Activated T-helper 1 cell treated with anti-CD3 and anti-CD28 coated beads, Interleukin-12 subunit alpha, Interleukin-12 subunit beta, Interleukin-2, Interleukin-4 antibody, amounts not matched to agents 30 ng/mL and 10 ng/mL and 1 ng/mL, durations not matched to agents 14 hours and 24 hours and 36 hours (primary cell): ENCODE measurements at regions of chr1 and their contacts with region 1.

Region 1: DNA sequence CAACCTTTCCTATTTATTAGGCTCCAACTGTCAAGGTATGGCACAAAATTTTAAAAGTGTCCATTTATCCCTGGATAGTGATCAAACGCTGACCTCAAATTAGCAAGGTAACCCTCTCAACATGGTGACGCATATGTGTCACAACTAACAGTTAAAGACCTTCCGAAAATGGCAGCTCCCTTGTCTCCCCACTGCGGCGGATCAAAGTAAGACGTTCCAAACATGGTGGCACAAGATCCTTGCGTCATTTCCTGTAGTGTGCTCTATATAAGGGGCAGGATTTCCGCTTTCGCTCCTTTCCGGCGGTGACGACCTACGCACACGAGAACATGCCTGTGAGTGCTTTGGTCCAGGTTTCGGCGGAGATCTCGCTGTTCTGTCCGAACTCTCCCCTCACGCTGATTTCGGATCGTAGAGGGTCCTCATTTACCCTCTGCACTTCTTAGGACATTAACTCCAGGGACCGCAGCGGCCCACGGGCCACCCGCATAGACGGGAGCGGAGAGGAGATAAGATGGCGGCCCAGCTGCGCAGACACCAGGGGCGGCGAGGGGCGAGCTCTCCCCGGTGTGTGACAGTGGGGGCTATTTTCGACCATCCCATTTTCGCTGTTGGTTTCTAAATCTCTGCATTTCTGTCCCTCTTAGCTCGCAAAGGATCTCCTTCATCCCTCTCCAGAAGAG is at the start of gene RPS27:
- DNase-seq: peak; percentile 86
- H3K4me3 Mint-ChIP-seq: peak within 1 kb of the TSS; percentile 94
- H3K27ac Mint-ChIP-seq: peak within 1 kb of the TSS; percentile 94
- H3K4me1 Mint-ChIP-seq: peaks cover 51% of the 10 kb centered on the region
- H3K27me3 Mint-ChIP-seq: peaks cover 1% of the 10 kb centered on the region
- total RNA-seq, gene RPS27: 1,226 and 1,349 TPM in 2 replicates

Region 2: DNA sequence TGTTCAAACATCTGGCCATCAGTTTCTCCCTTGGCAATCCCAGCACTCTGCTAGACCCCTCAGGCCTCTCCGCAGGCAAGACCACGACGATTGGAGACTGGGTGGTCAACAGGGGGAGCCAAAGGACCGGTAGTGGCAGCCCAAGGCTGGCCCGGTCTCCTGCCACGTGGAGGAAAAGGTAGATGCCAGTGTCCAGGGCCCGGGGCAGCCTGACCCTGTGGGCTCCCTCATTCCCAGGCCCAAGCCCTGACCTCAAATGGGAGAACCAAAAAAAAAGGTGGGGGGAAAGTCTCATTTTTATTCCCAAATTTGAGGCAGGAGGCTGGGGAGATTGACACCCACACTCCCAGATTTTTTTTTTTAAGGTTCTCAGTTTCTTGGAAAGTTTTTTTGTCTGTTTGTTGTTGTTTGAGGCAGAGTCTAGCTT is 479.6 kb before region 1 on chr1:
- intact Hi-C with region 1: loop called (anchors 1 kb)
- DNase-seq: peak; percentile 65
- H3K4me3 Mint-ChIP-seq: no peak overlapping the region
- H3K27ac Mint-ChIP-seq: peak overlapping the region; percentile 55
- H3K4me1 Mint-ChIP-seq: peaks cover 21% of the 10 kb centered on the region
- H3K27me3 Mint-ChIP-seq: peaks cover 2% of the 10 kb centered on the region

Region 3: GRCh38 chr1:153783233-153784190 is 207.1 kb before region 1 on chr1:
- intact Hi-C with region 1: loop called (anchors 1 kb)
- DNase-seq: peak; percentile 90
- H3K4me3 Mint-ChIP-seq: peak overlapping the region; percentile 88
- H3K27ac Mint-ChIP-seq: peak overlapping the region; percentile 92
- H3K4me1 Mint-ChIP-seq: no peaks in the 10 kb centered on the region
- H3K27me3 Mint-ChIP-seq: peaks cover 16% of the 10 kb centered on the region

Region 4: DNA sequence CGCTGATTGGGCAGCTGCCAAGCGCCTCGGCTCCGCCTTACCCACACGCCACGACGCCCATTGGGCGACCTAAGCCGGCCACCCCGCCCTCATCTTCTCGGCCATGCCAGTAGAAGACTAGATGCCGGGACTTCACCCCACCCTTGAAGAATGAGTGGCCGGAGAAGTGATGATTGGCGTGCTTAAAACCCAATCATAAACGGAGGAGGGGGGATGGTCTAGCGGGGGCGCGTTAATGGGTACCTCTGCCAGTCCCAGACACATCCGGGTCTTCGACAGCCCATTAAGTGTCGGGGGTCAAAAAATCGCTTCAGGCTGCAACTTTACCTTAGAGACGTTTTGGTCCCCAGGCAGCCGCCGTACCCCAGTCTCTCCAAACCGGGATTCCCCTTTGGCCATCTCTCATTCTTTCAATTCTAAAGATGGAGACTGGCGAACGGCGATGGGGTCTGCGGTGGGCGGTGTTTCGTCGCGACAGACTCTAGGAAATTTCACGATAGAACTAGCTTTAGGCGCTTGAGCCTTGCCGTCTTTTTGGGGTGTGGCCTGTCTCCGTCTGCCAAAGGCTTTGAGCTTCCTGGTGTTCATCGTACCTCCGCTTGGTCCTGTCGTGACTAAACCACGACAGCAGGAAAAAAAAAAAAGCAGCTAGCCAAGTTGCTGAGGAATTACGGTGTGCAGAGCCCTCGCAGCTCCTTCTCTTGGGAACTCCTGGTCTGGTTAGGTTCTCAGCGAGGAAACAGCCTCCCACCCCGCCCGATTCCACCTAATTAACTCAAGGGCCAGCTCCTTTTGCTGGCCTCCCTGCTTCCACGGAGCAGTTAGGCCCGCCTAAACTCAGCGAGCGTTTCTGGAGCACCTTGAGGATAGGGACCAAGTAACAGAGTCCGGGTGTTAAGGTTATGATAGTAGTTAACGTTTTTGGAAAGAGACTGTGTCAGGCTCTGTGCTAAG is 67.4 kb before region 1 on chr1 and contains the start of gene GATAD2B:
- intact Hi-C with region 1: loop called (anchors 1 kb)
- DNase-seq: peak; percentile 99
- H3K4me3 Mint-ChIP-seq: peak within 1 kb of the TSS; percentile 97
- H3K27ac Mint-ChIP-seq: peak within 1 kb of the TSS; percentile 92
- H3K4me1 Mint-ChIP-seq: peaks cover 53% of the 10 kb centered on the region
- H3K27me3 Mint-ChIP-seq: peaks cover 2% of the 10 kb centered on the region
- total RNA-seq, gene GATAD2B: 69.1 and 70.4 TPM in 2 replicates

Region 5: DNA sequence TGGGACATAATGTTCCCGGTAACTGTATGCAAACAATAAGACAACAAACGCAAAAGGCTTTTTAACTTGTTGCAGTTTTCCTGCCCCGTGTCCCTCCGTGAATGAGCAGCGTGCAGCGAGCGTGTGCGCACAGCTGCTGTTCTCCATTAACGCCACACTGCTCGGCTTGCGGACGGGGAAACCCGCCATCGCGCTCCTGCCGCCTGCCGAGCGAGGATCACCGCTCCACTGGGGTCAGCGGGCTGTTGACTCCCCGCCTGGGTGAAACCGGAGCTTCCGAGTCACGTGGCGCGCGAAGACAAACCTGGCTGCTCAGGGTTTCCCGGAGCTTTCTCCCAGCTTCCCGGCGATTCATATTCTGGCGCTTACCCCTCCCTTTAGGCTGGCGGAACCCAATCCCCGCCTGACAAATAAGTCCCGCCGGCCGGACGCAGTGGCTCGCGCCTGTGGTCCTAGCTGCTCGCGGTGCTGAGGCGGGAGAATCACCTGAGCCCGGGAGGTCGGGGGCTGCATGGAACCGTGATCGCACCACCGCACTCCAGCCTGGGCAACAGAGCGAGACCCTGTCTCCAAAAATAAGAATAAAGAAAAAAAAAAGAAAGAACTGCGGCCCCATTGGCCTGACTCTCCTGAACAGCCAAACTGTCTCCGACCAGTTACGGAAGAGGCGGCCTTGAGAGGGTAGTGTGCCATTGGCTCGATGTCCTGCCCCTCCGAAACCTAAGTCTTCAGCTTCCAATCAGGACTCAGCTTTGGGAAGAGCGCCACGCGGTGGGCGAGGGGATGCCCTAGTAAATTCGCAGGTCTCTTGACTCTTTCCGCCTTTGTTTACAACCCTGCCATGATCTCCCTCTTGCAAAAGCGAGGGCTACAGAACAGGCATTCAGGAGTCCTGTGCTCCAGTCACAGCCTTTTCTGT is 23.3 kb before region 1 on chr1 and contains the start of gene CREB3L4:
- intact Hi-C with region 1: loop called (anchors 1 kb)
- DNase-seq: peak; percentile 80
- H3K4me3 Mint-ChIP-seq: peak within 1 kb of the TSS; percentile 97
- H3K27ac Mint-ChIP-seq: peak within 1 kb of the TSS; percentile 95
- H3K4me1 Mint-ChIP-seq: peaks cover 52% of the 10 kb centered on the region
- H3K27me3 Mint-ChIP-seq: no peaks in the 10 kb centered on the region
- total RNA-seq, gene CREB3L4: 8.1 and 9.8 TPM in 2 replicates

Region 6: DNA sequence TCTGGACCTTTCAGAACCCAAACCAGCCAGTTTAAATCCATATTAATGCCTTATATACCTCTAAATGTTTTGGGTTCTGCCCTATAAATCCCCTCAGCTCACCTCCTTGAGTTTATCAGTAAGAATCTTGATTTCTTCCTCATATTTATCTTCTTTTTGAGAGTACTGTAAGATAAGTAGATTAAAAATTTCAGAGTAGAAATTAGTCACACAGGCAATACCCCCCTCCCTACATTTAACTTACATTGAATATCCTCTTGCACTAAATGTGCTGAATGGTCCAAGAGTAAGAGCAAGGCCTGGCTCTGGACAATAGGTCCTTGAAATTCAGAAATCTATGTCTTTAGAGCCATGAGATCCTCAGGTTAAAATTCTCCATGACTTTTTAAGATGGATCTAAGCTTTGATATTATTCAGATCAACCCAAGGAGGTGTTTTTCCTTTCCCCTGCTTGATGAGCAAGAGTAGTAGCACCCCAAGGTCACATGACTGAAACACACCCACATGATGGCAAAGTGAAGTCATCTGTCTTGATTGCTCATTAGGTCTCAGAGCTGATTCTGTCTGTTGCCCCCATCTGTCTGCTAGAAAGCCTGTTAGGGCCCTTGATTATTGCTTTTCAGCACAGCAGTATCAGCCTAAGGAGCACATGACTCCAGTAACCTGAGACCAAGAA is 180.1 kb after region 1 on chr1:
- intact Hi-C with region 1: loop called (anchors 1 kb)
- DNase-seq: no peak
- H3K4me3 Mint-ChIP-seq: peak overlapping the region; percentile 47
- H3K27ac Mint-ChIP-seq: peak overlapping the region; percentile 87
- H3K4me1 Mint-ChIP-seq: peaks cover 46% of the 10 kb centered on the region
- H3K27me3 Mint-ChIP-seq: no peaks in the 10 kb centered on the region